Activated CD4-positive, alpha-beta memory T cell treated with anti-CD3 and anti-CD28 coated beads for 36 hours (primary cell): ENCODE measurements at regions of chr5 and their contacts with region 1.

Region 1: GRCh38 chr5:136037001-136037705 is 8.4 kb downstream of the TGFBI start:
- DNase-seq: peak; percentile 82
- H3K4me3 Mint-ChIP-seq: no peak overlapping the region
- H3K27ac Mint-ChIP-seq: peak overlapping the region; percentile 71
- H3K4me1 Mint-ChIP-seq: peaks cover 28% of the 10 kb centered on the region
- H3K27me3 Mint-ChIP-seq: no peaks in the 10 kb centered on the region

Region 2: DNA sequence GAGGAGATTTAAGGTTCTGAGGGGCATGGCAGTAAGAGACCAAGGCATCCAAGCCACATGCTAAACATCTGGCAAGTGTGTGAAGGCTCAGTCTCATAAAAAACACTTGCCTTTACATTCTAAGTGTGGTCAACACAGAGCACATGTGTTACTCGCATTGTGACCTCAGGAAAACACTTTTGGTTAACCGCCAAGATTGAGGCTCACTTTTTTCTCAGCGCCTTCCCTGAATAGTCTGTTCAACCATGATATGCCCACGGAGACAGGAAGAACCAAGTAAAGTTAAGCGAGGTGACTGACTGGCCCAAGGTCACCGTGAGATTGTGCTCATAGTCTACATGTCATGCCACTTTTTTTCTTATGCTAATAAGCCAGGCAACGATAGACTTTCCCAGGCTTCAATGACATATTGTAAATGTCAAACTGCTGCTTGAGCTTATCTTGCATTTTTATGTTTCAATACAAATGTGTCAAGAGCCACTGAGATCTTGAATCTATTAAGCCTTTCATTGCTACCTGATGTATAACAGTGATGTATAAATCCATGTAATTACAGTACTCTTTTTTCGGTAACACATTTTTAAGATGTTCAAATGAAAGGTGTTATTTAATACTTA is 120.4 kb before region 1 on chr5:
- CTCF ChIA-PET with region 1: interaction called, 5 read pairs
- POLR2A ChIA-PET with region 1: no interaction called
- intact Hi-C with region 1: loop called (anchors 1 kb)
- DNase-seq: peak; percentile 22
- H3K4me3 Mint-ChIP-seq: no peak overlapping the region
- H3K27ac Mint-ChIP-seq: no peak overlapping the region
- H3K4me1 Mint-ChIP-seq: peaks cover 23% of the 10 kb centered on the region
- H3K27me3 Mint-ChIP-seq: peaks cover 30% of the 10 kb centered on the region

Region 3: GRCh38 chr5:136020383-136021015 is 16.7 kb before region 1 on chr5:
- CTCF ChIA-PET with region 1: no interaction called
- POLR2A ChIA-PET with region 1: no interaction called
- intact Hi-C with region 1: loop called (anchors 1 kb)
- DNase-seq: peak; percentile 70
- H3K4me3 Mint-ChIP-seq: no peak overlapping the region
- H3K27ac Mint-ChIP-seq: no peak overlapping the region
- H3K4me1 Mint-ChIP-seq: peaks cover 4% of the 10 kb centered on the region
- H3K27me3 Mint-ChIP-seq: peaks cover 6% of the 10 kb centered on the region

Region 4: DNA sequence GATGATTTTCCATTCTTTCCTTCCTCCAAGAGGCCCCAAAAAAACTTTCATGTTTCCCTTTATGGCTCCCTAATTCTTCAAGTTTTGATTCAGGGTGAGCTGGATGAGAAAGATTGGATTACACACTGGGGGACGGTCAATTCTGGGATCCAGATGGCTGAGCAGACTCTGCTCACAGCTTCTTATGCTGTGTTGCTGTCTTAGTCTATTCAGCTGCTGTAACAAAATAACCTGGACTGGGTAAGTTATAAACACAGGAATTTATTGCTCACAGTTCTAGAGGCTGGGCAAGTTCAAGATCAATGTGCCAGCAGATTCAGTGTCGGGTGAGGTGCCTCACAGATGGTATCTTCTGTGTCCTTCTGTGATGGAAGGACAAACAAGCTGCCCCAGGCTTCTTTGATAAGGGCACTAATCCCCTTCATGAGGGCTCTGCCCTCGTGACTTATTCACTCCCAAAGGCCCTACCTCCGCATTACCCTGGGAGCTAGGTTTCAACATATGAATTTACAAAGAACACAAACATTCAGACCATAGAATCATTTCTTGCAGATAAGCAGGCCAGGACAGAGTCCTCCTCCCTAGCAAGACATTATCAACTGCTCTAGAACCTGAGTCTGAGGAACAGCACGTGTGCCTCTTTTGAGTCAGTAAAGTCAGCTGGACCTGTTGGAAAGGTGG is 72.4 kb after region 1 on chr5:
- CTCF ChIA-PET with region 1: no interaction called
- POLR2A ChIA-PET with region 1: no interaction called
- intact Hi-C with region 1: no loop called
- DNase-seq: no peak
- H3K4me3 Mint-ChIP-seq: no peak overlapping the region
- H3K27ac Mint-ChIP-seq: no peak overlapping the region
- H3K4me1 Mint-ChIP-seq: no peaks in the 10 kb centered on the region
- H3K27me3 Mint-ChIP-seq: peaks cover 4% of the 10 kb centered on the region

Region 5: GRCh38 chr5:136132557-136133221 is 95.5 kb after region 1 on chr5 and contains the start of gene SMAD5:
- CTCF ChIA-PET with region 1: interaction called, 3 read pairs
- POLR2A ChIA-PET with region 1: no interaction called
- intact Hi-C with region 1: loop called (anchors 1 kb)
- DNase-seq: peak; percentile 86
- H3K4me3 Mint-ChIP-seq: peak within 1 kb of the TSS; percentile 82
- H3K27ac Mint-ChIP-seq: peak within 1 kb of the TSS; percentile 51
- H3K4me1 Mint-ChIP-seq: peaks cover 25% of the 10 kb centered on the region
- H3K27me3 Mint-ChIP-seq: peaks cover 28% of the 10 kb centered on the region
- total RNA-seq, gene SMAD5: 9.6 to 10.9 TPM

Region 6: GRCh38 chr5:136141561-136141960 is 104.4 kb after region 1 on chr5:
- CTCF ChIA-PET with region 1: no interaction called
- POLR2A ChIA-PET with region 1: no interaction called
- intact Hi-C with region 1: loop called (anchors 1 kb)
- DNase-seq: no peak
- H3K4me3 Mint-ChIP-seq: no peak overlapping the region
- H3K27ac Mint-ChIP-seq: no peak overlapping the region
- H3K4me1 Mint-ChIP-seq: peaks cover 20% of the 10 kb centered on the region
- H3K27me3 Mint-ChIP-seq: peaks cover 10% of the 10 kb centered on the region

Region 7: GRCh38 chr5:137735555-137736284 is 1698.6 kb after region 1 on chr5 and contains the start of gene KLHL3:
- CTCF ChIA-PET with region 1: no interaction called
- POLR2A ChIA-PET with region 1: no interaction called
- intact Hi-C with region 1: loop called (anchors 10 kb)
- DNase-seq: peak; percentile 50
- H3K4me3 Mint-ChIP-seq: no peak within 1 kb of the TSS
- H3K27ac Mint-ChIP-seq: no peak within 1 kb of the TSS
- H3K4me1 Mint-ChIP-seq: peaks cover 31% of the 10 kb centered on the region
- H3K27me3 Mint-ChIP-seq: no peaks in the 10 kb centered on the region
- total RNA-seq, gene KLHL3: 3.0 to 3.4 TPM